Tibial artery (tissue), 4 donors: ENCODE measurements at regions of chr19 and their contacts with region 1.

Region 1: GRCh38 chr19:16628183-16628983 is at the start of gene MED26:
- DNase-seq: peak; percentile 94 to 97
- H3K4me3 ChIP-seq: peak within 1 kb of the TSS; percentile 65 to 86
- H3K27ac ChIP-seq: peak within 1 kb of the TSS; percentile 80 to 88
- H3K4me1 ChIP-seq: peaks cover 0 to 42% (median 31%) of the 10 kb centered on the region in 4 donors
- H3K27me3 ChIP-seq: no peaks in the 10 kb centered on the region
- CTCF ChIP-seq: no peak

Region 2: GRCh38 chr19:16572332-16573211 is 55.8 kb before region 1 on chr19 and contains the start of gene SLC35E1:
- intact Hi-C with region 1: loop called (anchors 2 kb)
- DNase-seq: peak; percentile 95 to 98
- H3K4me3 ChIP-seq: peak within 1 kb of the TSS; percentile 70 to 78
- H3K27ac ChIP-seq: peak within 1 kb of the TSS; percentile 85 to 86
- H3K4me1 ChIP-seq: peaks cover 0 to 46% (median 36%) of the 10 kb centered on the region in 4 donors
- H3K27me3 ChIP-seq: no peaks in the 10 kb centered on the region
- CTCF ChIP-seq: no peak

Region 3: DNA sequence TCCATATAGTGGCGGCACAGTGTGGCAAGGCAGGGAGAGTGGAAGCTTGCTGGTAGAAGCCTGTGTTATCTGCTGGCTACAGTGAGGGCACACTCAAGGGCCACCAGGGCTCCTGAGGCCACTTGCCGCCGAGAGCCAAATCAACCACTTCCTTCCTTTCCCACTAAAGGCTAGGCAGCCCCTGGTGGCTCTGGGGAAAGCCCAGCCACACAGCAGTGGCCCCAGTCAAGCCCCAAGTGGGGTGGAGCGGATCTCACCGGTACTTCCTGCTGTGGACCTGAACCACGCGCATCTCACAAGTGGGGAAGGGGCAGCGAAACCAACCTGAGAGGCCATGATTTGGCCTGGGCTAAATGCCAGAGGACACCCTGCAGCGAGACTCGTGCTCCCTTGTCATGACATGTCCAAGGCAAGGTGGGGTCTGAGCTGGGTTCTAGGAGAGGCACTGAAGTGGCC is 34.2 kb before region 1 on chr19:
- intact Hi-C with region 1: no loop called
- DNase-seq: no peak
- H3K4me3 ChIP-seq: no peak overlapping the region
- H3K27ac ChIP-seq: no peak overlapping the region
- H3K4me1 ChIP-seq: peaks cover 0 to 39% (median 14%) of the 10 kb centered on the region in 4 donors
- H3K27me3 ChIP-seq: no peaks in the 10 kb centered on the region
- CTCF ChIP-seq: no peak

Region 4: GRCh38 chr19:16659831-16660708 is 31.7 kb after region 1 on chr19 and contains the start of gene SMIM7:
- intact Hi-C with region 1: loop called (anchors 2 kb)
- DNase-seq: peak; percentile 98 to 99
- H3K4me3 ChIP-seq: peak within 1 kb of the TSS; percentile 70 to 91
- H3K27ac ChIP-seq: peak within 1 kb of the TSS; percentile 91 to 95
- H3K4me1 ChIP-seq: peaks cover 0 to 48% (median 36%) of the 10 kb centered on the region in 4 donors
- H3K27me3 ChIP-seq: peaks cover 0 to 4% of the 10 kb centered on the region in 2 donors
- CTCF ChIP-seq: no peak

Region 5: GRCh38 chr19:16671652-16672274 is 43.4 kb after region 1 on chr19:
- intact Hi-C with region 1: no loop called
- DNase-seq: no peak
- H3K4me3 ChIP-seq: no peak overlapping the region
- H3K27ac ChIP-seq: no peak overlapping the region
- H3K4me1 ChIP-seq: no peaks in the 10 kb centered on the region
- H3K27me3 ChIP-seq: no peaks in the 10 kb centered on the region
- CTCF ChIP-seq: no peak